Naive thymus-derived CD8-positive, alpha-beta T cell (primary cell): ENCODE measurements at regions of chr9 and their contacts with region 1.

Region 1: GRCh38 chr9:92954049-92954861 is 6.9 kb downstream of the FGD3 start:
- DNase-seq: peak; percentile 52 to 92 (median 82)
- ATAC-seq: peak; percentile 87 to 95
- H3K4me3 Mint-ChIP-seq: peak overlapping the region; percentile 74 to 93 (median 87)
- H3K27ac Mint-ChIP-seq: peak overlapping the region; percentile 82 to 99 (median 98)
- H3K4me1 Mint-ChIP-seq: peaks cover 34 to 87% (median 79%) of the 10 kb centered on the region in 4 donors
- H3K27me3 Mint-ChIP-seq: no peaks in the 10 kb centered on the region

Region 2: DNA sequence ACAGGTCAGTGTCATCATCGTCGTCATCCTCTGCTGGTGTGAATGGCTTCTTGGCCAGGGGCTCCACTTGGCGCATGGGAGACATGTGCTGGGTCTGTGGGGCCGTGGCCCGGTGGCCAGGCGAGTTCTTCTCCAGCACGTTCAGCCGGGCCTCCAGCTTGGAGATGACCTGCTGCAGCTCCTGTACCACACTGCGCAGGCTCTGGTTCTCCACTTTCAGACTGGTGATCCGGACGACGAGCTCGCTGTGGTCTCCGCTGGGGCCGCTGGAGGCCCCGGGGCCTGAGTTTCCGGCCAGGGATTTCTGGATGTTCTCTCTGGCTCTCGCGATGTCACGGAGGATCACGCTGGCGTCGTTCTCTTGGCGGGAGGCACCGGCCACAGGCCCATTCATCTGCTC is 117.1 kb before region 1 on chr9:
- POLR2A ChIA-PET with region 1: no interaction called
- DNase-seq: no peak
- ATAC-seq: no peak
- H3K4me3 Mint-ChIP-seq: no peak overlapping the region
- H3K27ac Mint-ChIP-seq: peak overlapping the region in 1 of 10 donors; percentile 5
- H3K4me1 Mint-ChIP-seq: no peaks in the 10 kb centered on the region
- H3K27me3 Mint-ChIP-seq: no peaks in the 10 kb centered on the region

Region 3: DNA sequence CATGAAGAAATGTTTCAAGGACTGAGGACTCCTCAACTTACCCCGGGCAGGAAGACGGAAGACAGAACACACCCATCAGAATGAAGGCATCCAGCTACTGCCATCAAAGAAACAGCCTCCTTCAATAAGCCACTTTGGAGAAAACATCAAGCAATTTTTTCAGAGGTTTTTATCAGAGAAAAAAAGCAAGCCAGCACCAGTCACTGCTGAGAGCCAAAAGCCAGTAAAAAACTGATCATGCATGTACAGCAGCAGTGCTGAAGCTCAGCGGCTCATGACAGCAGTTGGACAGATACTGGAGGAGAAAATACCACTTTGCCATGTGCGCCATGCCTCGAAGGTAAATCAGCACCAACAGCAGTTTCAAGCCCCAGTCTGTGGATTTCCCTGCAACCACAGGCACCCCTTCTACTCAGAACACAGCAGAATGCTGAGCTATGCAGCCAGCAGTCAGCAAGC is 66.3 kb before region 1 on chr9:
- POLR2A ChIA-PET with region 1: interaction called, 21 read pairs
- DNase-seq: peak in 8 of 10 donors; percentile 26 to 69 (median 46)
- ATAC-seq: peak; percentile 76 to 78
- H3K4me3 Mint-ChIP-seq: peak overlapping the region; percentile 26 to 79 (median 65)
- H3K27ac Mint-ChIP-seq: peak overlapping the region; percentile 50 to 90 (median 83)
- H3K4me1 Mint-ChIP-seq: peaks cover 31 to 69% (median 43%) of the 10 kb centered on the region in 4 donors
- H3K27me3 Mint-ChIP-seq: peaks cover 0 to 5% (median 0%) of the 10 kb centered on the region in 5 donors

Region 4: DNA sequence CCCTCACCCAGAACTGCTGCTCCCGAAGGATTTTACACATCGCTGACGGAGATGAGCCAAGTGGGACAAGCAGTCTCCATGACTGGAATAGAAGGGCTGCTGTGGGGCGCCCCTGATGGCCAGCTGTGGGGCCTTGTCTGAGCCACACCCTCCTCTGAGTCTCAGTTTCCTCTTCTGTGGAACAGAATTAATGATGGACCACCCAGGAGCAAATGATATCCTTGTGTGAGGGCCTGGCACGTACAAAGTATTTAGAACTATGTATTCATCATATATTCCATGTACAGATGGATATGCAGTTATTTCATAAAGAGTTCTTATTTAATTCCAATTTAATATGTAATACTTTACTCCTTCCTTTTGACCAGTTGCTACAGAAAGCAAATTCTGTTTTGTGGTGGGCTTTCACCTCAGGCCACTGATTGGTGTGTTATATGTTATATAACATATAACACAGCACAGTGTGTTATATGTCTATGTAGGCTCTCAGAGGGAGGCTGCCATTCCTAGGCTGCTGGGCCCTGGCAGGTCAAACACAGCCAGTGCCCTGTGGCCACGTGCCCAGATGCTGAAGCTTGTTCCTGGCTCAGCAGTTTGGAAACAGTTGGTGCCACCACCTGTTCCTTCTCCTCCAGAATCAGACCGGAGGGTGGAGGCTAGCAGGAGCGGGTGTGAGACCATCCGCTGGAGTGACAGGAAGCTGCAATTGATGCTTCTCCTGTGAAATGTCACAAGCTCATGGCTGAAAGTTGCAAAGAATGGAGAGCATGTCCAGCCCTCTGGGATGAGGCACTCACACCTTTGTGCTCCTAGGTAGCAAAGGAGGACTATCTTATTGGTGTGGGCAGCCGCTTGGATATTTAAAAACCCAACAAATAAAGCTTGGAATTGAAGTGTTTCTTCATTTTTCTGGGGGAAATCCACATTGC is 11.3 kb before region 1 on chr9:
- POLR2A ChIA-PET with region 1: interaction called, 15 read pairs
- DNase-seq: no peak
- ATAC-seq: no peak
- H3K4me3 Mint-ChIP-seq: no peak overlapping the region
- H3K27ac Mint-ChIP-seq: no peak overlapping the region
- H3K4me1 Mint-ChIP-seq: peaks cover 11 to 28% (median 19%) of the 10 kb centered on the region in 4 donors
- H3K27me3 Mint-ChIP-seq: peaks cover 0 to 4% (median 0%) of the 10 kb centered on the region in 5 donors

Region 5: DNA sequence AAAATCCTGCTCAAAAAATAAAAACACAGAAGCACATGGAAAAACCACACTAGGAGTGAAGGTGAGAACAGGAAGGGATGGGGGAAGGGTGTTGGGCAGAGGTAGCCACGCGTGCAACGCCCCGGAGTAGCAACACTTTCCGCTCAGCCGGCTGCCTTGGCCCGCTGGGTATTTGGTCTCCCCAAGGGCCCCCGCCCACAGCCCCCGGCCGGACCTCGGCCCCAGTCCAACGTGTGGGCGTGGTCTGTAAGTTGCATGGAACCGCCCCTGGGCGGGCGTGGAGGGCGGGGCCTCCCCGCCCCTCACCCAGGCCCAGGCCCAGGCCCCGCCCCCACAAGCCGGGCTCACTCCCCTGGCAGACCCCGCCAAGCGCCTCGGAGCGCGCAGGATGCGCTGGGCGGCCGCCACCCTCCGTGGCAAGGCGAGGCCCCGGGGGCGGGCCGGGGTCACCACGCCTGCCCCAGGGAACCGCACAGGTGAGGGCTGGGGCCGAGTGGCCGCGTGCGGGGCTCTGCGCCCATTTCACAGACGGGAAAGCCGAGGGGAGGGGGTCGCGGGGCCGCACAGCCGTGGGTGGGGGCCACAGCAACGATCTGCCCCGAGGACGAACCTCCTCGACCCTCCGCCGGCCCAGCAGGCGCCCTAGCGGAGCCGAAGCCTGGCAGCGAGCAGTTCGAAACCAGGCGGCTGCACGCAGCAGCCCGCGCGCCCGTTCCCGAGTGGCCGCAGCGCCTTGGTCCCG is 104.3 kb after region 1 on chr9 and contains the start of gene SUSD3:
- POLR2A ChIA-PET with region 1: interaction called, 19 read pairs
- DNase-seq: peak; percentile 57 to 80 (median 62)
- ATAC-seq: peak; percentile 57 to 63
- H3K4me3 Mint-ChIP-seq: peak within 1 kb of the TSS; percentile 85 to 96 (median 92)
- H3K27ac Mint-ChIP-seq: peak within 1 kb of the TSS; percentile 93 to 100 (median 100)
- H3K4me1 Mint-ChIP-seq: peaks cover 37 to 80% (median 73%) of the 10 kb centered on the region in 4 donors
- H3K27me3 Mint-ChIP-seq: no peaks in the 10 kb centered on the region
- polyA plus RNA-seq, gene SUSD3: 86.7 to 208 (median 145) TPM